ENCODE measurements at regions of chr9 and their contacts with region 1.

Region 1: GRCh38 chr9:136849038-136849959 is at the start of gene PHPT1:
- DNase-seq: peak; percentile 94
- ATAC-seq: peak; percentile 94
- H3K4me3 Mint-ChIP-seq: peak within 1 kb of the TSS; percentile 95
- H3K27ac Mint-ChIP-seq: peak within 1 kb of the TSS; percentile 93
- H3K4me1 Mint-ChIP-seq: peaks cover 27% of the 10 kb centered on the region
- H3K27me3 Mint-ChIP-seq: peaks cover 6% of the 10 kb centered on the region
- CTCF ChIP-seq: no peak
- total RNA-seq, gene PHPT1: 58.8 and 64.6 TPM in 2 replicates

Region 2: DNA sequence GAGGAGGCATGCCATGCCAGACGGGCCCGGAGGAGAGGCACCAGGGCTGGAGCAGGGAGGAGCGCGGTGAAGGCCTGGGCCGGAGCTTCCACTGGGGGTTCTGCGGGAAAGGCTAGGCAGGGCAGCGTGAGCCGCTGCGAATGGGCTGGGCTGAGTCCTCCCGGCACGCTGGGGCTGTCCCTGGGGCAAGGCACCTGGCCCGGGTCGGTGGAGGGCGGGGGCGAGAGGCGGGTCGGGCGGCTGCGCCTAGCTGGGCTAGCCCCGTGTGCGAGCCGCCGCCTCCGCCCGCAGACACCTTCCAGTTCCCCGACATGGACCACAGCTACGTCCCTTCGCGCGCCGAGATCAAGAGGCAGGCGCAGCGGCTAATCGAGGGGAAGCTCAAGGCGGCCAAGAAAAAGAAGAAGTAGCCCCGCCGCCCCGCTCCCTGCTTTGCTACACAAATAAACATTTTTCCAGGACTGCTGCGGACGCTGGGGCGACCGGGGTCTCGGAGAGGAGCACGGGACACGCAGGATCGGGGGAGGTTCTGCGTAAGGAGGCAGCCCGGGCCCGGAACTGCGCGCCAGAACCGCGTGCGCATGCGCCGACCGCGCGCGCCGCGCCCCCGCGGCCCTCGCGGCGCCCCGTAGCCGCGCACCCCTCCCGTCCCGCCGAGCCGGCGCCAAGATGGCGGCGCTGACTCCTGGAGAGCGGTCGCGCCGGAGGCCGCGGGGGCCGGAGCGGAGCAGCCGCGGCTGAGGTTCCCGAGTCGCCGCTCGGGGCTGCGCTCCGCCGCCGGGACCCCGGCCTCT is 41.8 kb before region 1 on chr9 and contains the start of gene RABL6:
- CTCF ChIA-PET with region 1: no interaction called
- POLR2A ChIA-PET with region 1: interaction called, 3 read pairs
- intact Hi-C with region 1: loop called (anchors 1 kb)
- DNase-seq: peak; percentile 86
- ATAC-seq: peak; percentile 87
- H3K4me3 Mint-ChIP-seq: peak within 1 kb of the TSS; percentile 88
- H3K27ac Mint-ChIP-seq: peak within 1 kb of the TSS; percentile 87
- H3K4me1 Mint-ChIP-seq: peaks cover 31% of the 10 kb centered on the region
- H3K27me3 Mint-ChIP-seq: no peaks in the 10 kb centered on the region
- CTCF ChIP-seq: no peak
- total RNA-seq, gene RABL6: 70.1 and 75.0 TPM in 2 replicates

Region 3: GRCh38 chr9:136885950-136886578 is 36.8 kb after region 1 on chr9 and contains the start of gene TRAF2:
- CTCF ChIA-PET with region 1: interaction called, 3 read pairs
- POLR2A ChIA-PET with region 1: interaction called, 3 read pairs
- intact Hi-C with region 1: loop called (anchors 1 kb)
- DNase-seq: peak; percentile 95
- ATAC-seq: peak; percentile 89
- H3K4me3 Mint-ChIP-seq: peak within 1 kb of the TSS; percentile 91
- H3K27ac Mint-ChIP-seq: peak within 1 kb of the TSS; percentile 88
- H3K4me1 Mint-ChIP-seq: peaks cover 44% of the 10 kb centered on the region
- H3K27me3 Mint-ChIP-seq: no peaks in the 10 kb centered on the region
- CTCF ChIP-seq: no peak
- total RNA-seq, gene TRAF2: 49.7 and 58.2 TPM in 2 replicates

Region 4: GRCh38 chr9:136944519-136945279 is 95.4 kb after region 1 on chr9 and contains the starts of genes C8G and FBXW5:
- CTCF ChIA-PET with region 1: interaction called, 3 read pairs
- POLR2A ChIA-PET with region 1: interaction called, 8 read pairs
- intact Hi-C with region 1: loop called (anchors 1 kb)
- DNase-seq: peak; percentile 97
- ATAC-seq: peak; percentile 90
- H3K4me3 Mint-ChIP-seq: peak within 1 kb of the TSS; percentile 80
- H3K27ac Mint-ChIP-seq: peak within 1 kb of the TSS; percentile 79
- H3K4me1 Mint-ChIP-seq: peaks cover 9% of the 10 kb centered on the region
- H3K27me3 Mint-ChIP-seq: no peaks in the 10 kb centered on the region
- CTCF ChIP-seq: peak; percentile 48
- total RNA-seq, gene C8G: 0.69 and 3.4 TPM in 2 replicates
- total RNA-seq, gene FBXW5: 81.5 and 82.1 TPM in 2 replicates

Region 5: GRCh38 chr9:137168905-137169856 is 319.9 kb after region 1 on chr9:
- CTCF ChIA-PET with region 1: no interaction called
- POLR2A ChIA-PET with region 1: no interaction called
- intact Hi-C with region 1: loop called (anchors 10 kb)
- DNase-seq: no peak
- ATAC-seq: peak; percentile 26
- H3K4me3 Mint-ChIP-seq: peak overlapping the region; percentile 66
- H3K27ac Mint-ChIP-seq: no peak overlapping the region
- H3K4me1 Mint-ChIP-seq: peaks cover 8% of the 10 kb centered on the region
- H3K27me3 Mint-ChIP-seq: peaks cover 16% of the 10 kb centered on the region
- CTCF ChIP-seq: no peak

Measured in activated B cell treated with CpG ODN at 0.5 μM for 24 hours (primary cell).